Dendritic cell treated with granulocyte-macrophage colony-stimulating factor and Interleukin-4, amounts not matched to agents 40 ng/mL and 50 ng/mL, for 4 days (primary cell): ENCODE measurements at regions of chr10 and their contacts with region 1.

Region 1: GRCh38 chr10:110610308-110610774 is 33.8 kb upstream of the RBM20 start:
- H3K4me3 Mint-ChIP-seq: no peak overlapping the region
- H3K27ac Mint-ChIP-seq: no peak overlapping the region
- H3K4me1 Mint-ChIP-seq: peaks cover 7% of the 10 kb centered on the region
- H3K27me3 Mint-ChIP-seq: no peaks in the 10 kb centered on the region

Region 2: DNA sequence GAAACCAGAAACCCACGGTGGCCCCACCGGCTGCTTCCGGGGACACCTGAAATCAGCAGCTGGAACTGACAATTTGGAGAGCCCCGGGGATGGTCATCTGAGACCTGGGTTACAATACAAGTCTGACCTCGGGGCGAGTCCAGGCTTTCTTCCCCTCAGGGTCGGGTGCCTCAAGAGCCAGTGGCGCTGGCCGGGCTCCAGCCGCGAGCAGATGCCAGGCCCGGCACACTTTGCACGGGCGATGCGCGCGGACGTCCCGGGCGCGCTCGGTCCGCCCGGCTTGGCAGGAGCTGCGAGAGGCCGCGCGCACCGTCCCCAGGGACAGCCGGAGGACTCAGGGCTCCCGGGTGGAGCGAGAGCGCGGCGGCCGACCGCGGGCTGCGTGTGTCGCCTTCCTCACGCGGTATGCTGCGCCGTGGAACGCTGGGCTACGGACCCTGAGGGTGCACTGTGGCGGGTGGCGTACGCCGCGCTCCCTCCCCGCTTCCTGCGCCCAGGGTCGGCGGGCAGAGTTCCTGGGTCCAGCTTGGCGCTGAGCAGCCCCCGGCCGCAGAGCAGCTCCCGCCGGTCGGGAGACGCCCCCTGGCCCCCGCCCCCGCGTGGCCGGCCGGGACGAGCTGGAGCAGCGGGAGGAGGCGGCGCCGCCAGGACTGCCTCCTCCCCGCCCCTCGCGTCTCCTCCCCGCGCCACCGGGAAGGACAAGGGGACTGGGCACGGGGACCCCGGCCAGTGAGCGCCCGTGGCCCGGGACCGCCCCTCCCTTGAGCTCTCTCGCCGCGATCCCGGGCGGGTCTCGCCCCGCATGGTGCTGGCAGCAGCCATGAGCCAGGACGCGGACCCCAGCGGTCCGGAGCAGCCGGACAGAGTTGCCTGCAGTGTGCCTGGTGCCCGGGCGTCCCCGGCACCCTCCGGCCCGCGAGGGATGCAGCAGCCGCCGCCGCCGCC is 33.6 kb after region 1 on chr10 and contains the start of gene RBM20:
- intact Hi-C with region 1: no loop called
- H3K4me3 Mint-ChIP-seq: peak within 1 kb of the TSS; percentile 49
- H3K27ac Mint-ChIP-seq: no peak within 1 kb of the TSS
- H3K4me1 Mint-ChIP-seq: peaks cover 15% of the 10 kb centered on the region
- H3K27me3 Mint-ChIP-seq: peaks cover 77% of the 10 kb centered on the region

Region 3: DNA sequence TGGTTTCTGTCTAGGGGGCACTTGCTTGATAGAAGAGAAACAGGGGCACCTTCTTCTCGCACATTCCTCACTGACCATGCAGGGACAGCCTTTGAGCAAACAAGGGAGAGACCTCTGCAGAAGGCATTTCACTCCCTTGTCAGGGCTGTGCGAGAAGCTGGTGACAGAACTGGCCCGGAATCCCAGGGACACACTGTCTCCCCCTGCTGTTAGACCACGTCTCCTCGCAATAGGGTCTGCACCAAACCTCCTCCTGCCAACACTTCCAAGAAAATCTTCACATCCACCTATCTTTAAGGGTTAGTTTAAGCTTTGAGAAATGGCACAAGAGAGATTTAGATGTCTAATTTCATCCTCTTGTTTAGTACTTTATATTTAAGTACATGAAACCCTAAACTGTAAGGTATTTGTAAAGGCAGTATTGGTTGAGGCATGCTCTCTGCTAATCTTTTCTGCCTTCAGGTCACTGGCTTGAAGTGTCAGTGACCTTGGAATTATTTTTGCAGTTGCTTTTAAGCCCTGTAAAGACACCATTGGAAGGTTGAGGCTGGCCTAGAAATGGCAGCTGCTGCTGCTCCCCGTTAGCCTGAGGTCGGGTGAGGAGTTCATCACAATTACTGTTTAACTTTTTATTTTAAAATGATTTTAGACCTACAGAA is 70.8 kb after region 1 on chr10:
- intact Hi-C with region 1: loop called (anchors 1 kb)
- H3K4me3 Mint-ChIP-seq: no peak overlapping the region
- H3K27ac Mint-ChIP-seq: no peak overlapping the region
- H3K4me1 Mint-ChIP-seq: peaks cover 12% of the 10 kb centered on the region
- H3K27me3 Mint-ChIP-seq: peaks cover 7% of the 10 kb centered on the region

Region 4: GRCh38 chr10:111207500-111207899 is 597.2 kb after region 1 on chr10:
- intact Hi-C with region 1: loop called (anchors 5 kb)
- H3K4me3 Mint-ChIP-seq: no peak overlapping the region
- H3K27ac Mint-ChIP-seq: no peak overlapping the region
- H3K4me1 Mint-ChIP-seq: no peaks in the 10 kb centered on the region
- H3K27me3 Mint-ChIP-seq: peaks cover 5% of the 10 kb centered on the region